ENCODE measurements at regions of chr1 and their contacts with region 1.

Region 1: GRCh38 chr1:220685879-220686278 is 4.3 kb upstream of the C1orf115 start:
- DNase-seq: no peak
- H3K4me3 ChIP-seq: no peak overlapping the region
- H3K27ac ChIP-seq: no peak overlapping the region
- H3K4me1 ChIP-seq: peaks cover 3% of the 10 kb centered on the region
- H3K27me3 ChIP-seq: no peaks in the 10 kb centered on the region
- CTCF ChIP-seq: no peak

Region 2: GRCh38 chr1:220565670-220566069 is 120.2 kb before region 1 on chr1:
- intact Hi-C with region 1: no loop called
- DNase-seq: no peak
- H3K4me3 ChIP-seq: no peak overlapping the region
- H3K27ac ChIP-seq: no peak overlapping the region
- H3K4me1 ChIP-seq: no peaks in the 10 kb centered on the region
- H3K27me3 ChIP-seq: no peaks in the 10 kb centered on the region
- CTCF ChIP-seq: no peak

Region 3: GRCh38 chr1:220733090-220733601 is 47.3 kb after region 1 on chr1:
- intact Hi-C with region 1: loop called (anchors 5 kb)
- DNase-seq: peak; percentile 92
- H3K4me3 ChIP-seq: no peak overlapping the region
- H3K27ac ChIP-seq: peak overlapping the region; percentile 3
- H3K4me1 ChIP-seq: no peaks in the 10 kb centered on the region
- H3K27me3 ChIP-seq: no peaks in the 10 kb centered on the region
- CTCF ChIP-seq: peak; percentile 85

Region 4: DNA sequence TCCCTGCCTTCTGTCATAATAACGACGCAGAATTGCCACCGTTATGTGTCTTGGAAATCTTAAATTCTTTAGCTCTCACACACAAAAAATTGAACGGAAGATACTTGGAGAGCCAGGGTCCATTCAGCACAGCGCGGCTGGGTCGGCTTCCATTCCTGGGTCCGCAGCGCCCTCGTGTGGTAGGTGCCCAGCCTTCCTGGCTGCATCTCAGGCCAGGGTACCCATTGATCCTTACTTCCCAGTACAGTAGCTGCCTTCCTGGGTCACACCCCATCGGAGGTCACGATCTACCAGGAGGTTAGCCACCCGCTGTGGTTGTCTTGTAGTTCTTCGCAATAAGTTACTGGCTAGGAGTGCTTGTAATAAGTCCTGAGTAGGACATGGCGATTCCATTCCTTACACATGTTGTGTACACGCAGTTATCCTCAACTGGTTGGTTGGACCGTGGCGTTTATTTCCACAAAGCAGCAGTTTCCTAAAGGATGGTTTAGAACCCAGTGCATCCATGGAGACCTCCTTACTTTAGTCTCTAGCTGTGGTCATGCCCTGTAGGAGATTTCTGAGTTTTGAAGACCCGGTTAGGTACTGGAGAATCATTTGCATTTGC is 90.9 kb after region 1 on chr1:
- intact Hi-C with region 1: loop called (anchors 5 kb)
- DNase-seq: peak; percentile 90
- H3K4me3 ChIP-seq: no peak overlapping the region
- H3K27ac ChIP-seq: no peak overlapping the region
- H3K4me1 ChIP-seq: no peaks in the 10 kb centered on the region
- H3K27me3 ChIP-seq: no peaks in the 10 kb centered on the region
- CTCF ChIP-seq: peak; percentile 90